GM12878 (cell line): ENCODE measurements at regions of chr13 and their contacts with region 1.

Region 1: DNA sequence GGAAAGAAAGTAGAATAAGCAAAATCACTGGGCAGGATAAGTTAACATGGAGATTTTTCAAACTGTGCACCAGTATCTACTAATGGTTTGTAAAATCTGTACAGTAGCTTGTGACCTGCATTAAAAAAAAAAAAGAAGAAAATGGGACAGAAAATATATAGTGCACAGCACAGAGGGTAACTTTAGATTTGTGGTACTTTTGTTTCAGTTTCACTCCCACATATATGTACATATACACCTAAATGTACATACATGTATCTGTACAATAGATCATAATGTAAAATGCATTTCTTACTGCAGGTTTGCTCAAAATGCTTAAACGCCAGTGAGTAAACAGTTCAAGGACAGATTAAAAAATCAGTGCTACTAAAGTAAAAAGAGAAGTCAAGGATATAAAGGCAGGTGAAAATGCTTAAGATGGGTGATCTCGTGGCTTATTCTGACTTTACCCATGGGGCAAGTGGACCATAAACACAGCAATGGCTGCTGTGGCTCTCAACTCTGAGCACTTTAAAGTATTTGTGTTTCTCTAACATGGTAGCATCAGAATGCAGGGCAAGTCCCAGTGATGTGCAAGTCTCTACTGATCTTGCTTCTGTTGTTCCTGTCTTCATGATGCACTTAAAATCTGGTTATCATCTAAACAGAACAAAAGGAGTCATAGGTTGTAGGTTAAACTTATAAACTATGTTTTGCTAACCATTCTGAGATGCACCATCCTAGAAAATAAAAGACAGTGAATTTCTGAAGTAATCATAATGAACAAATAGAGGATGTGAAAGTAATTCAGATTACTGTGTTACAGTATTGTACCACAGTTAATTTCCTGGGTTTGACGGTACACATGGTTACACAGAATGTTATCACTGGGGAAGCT is 112.3 kb downstream of the MIPEP start:
- DNase-seq: peak; percentile 56
- ATAC-seq: peak; percentile 96
- H3K4me3 ChIP-seq: no peak overlapping the region
- H3K27ac ChIP-seq: peak overlapping the region; percentile 94
- H3K4me1 ChIP-seq: peaks cover 40% of the 10 kb centered on the region
- H3K27me3 ChIP-seq: no peaks in the 10 kb centered on the region
- CTCF ChIP-seq: no peak
- EP300 ChIP-seq: peak; percentile 84 to 91
- POLR2A ChIP-seq: no peak
- RAD21 ChIP-seq: no peak

Region 2: GRCh38 chr13:23715762-23716235 is 61.1 kb before region 1 on chr13:
- CTCF ChIA-PET with region 1: interaction called, 3 read pairs
- POLR2A ChIA-PET with region 1: no interaction called
- RAD21 ChIA-PET with region 1: interaction called, 3 read pairs
- SMC1A ChIA-PET with region 1: interaction called, 3 read pairs
- in situ Hi-C with region 1: no loop called
- intact Hi-C with region 1: loop called (anchors 5 kb)
- DNase-seq: no peak
- ATAC-seq: peak; percentile 40
- H3K4me3 ChIP-seq: no peak overlapping the region
- H3K27ac ChIP-seq: no peak overlapping the region
- H3K4me1 ChIP-seq: peaks cover 8% of the 10 kb centered on the region
- H3K27me3 ChIP-seq: no peaks in the 10 kb centered on the region
- CTCF ChIP-seq: peak; percentile 17 to 46 (median 38); a peak in 3 of 6 replicates
- EP300 ChIP-seq: no peak
- POLR2A ChIP-seq: no peak
- RAD21 ChIP-seq: peak; percentile 56

Region 3: GRCh38 chr13:23752111-23753001 is 24.6 kb before region 1 on chr13:
- CTCF ChIA-PET with region 1: interaction called, 5 read pairs
- POLR2A ChIA-PET with region 1: interaction called, 9 read pairs
- RAD21 ChIA-PET with region 1: interaction called, 7 read pairs
- SMC1A ChIA-PET with region 1: interaction called, 11 read pairs
- in situ Hi-C with region 1: no loop called
- intact Hi-C with region 1: loop called (anchors 2 kb)
- DNase-seq: peak; percentile 69
- ATAC-seq: peak; percentile 85
- H3K4me3 ChIP-seq: no peak overlapping the region
- H3K27ac ChIP-seq: peak overlapping the region; percentile 86
- H3K4me1 ChIP-seq: peaks cover 42% of the 10 kb centered on the region
- H3K27me3 ChIP-seq: no peaks in the 10 kb centered on the region
- CTCF ChIP-seq: no peak
- EP300 ChIP-seq: peak; percentile 33 to 74; a peak in 3 of 4 replicates
- POLR2A ChIP-seq: no peak
- RAD21 ChIP-seq: peak; percentile 29; the same call in 1 of the 2 replicates

Region 4: GRCh38 chr13:23794267-23795161 is 17.6 kb after region 1 on chr13:
- CTCF ChIA-PET with region 1: interaction called, 17 read pairs
- POLR2A ChIA-PET with region 1: interaction called, 6 read pairs
- RAD21 ChIA-PET with region 1: interaction called, 21 read pairs
- SMC1A ChIA-PET with region 1: interaction called, 27 read pairs
- in situ Hi-C with region 1: no loop called
- intact Hi-C with region 1: loop called (anchors 1 kb)
- DNase-seq: peak; percentile 72
- ATAC-seq: peak; percentile 72
- H3K4me3 ChIP-seq: 0 out of 2 replicates have a peak overlapping the region, but pooled peaks have one; percentile 22
- H3K27ac ChIP-seq: peak overlapping the region; percentile 93
- H3K4me1 ChIP-seq: peaks cover 51% of the 10 kb centered on the region
- H3K27me3 ChIP-seq: no peaks in the 10 kb centered on the region
- CTCF ChIP-seq: no peak
- EP300 ChIP-seq: peak; percentile 67 to 98
- POLR2A ChIP-seq: no peak
- RAD21 ChIP-seq: no peak

Region 5: DNA sequence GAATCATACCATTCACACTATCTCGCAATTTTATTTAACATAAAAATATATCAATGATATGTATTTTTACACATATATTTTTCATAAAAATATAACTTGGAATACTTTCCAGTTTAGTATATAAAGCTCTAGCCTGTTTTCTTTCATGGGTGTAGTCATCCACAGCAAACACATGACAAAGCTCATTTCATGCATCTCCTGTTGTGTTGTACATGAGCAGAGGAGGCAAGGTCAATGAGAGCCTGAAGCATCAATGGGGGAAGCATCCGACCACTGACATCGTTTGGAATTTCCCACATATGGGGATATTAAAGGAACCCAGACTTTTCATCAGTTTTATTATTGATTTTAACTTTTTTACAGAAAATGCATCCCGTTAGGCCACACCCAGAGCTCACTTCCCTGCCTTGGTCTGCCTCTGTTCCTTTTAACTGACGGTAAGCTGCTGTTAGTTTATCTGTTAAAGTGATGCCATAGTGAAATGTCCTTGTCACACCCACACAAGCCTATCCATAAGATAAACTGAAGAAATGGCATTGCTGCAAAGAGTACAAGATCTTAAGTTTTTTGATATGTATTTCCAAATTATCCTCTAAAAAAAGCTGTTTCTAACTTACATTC is 68.3 kb after region 1 on chr13:
- CTCF ChIA-PET with region 1: interaction called, 9 read pairs
- POLR2A ChIA-PET with region 1: no interaction called
- RAD21 ChIA-PET with region 1: interaction called, 9 read pairs
- SMC1A ChIA-PET with region 1: interaction called, 11 read pairs
- in situ Hi-C with region 1: no loop called
- intact Hi-C with region 1: no loop called
- DNase-seq: no peak
- ATAC-seq: peak; percentile 59
- H3K4me3 ChIP-seq: 0 out of 2 replicates have a peak overlapping the region, but pooled peaks have one; percentile 26
- H3K27ac ChIP-seq: peak overlapping the region; percentile 82
- H3K4me1 ChIP-seq: peaks cover 56% of the 10 kb centered on the region
- H3K27me3 ChIP-seq: no peaks in the 10 kb centered on the region
- CTCF ChIP-seq: no peak
- EP300 ChIP-seq: no peak
- POLR2A ChIP-seq: no peak
- RAD21 ChIP-seq: no peak

Region 6: GRCh38 chr13:24463078-24463477 is 686.1 kb after region 1 on chr13:
- CTCF ChIA-PET with region 1: no interaction called
- POLR2A ChIA-PET with region 1: no interaction called
- RAD21 ChIA-PET with region 1: no interaction called
- SMC1A ChIA-PET with region 1: no interaction called
- in situ Hi-C with region 1: no loop called
- intact Hi-C with region 1: no loop called
- DNase-seq: no peak
- ATAC-seq: no peak
- H3K4me3 ChIP-seq: no peak overlapping the region
- H3K27ac ChIP-seq: no peak overlapping the region
- H3K4me1 ChIP-seq: peaks cover 8% of the 10 kb centered on the region
- H3K27me3 ChIP-seq: no peaks in the 10 kb centered on the region
- CTCF ChIP-seq: no peak
- EP300 ChIP-seq: no peak
- POLR2A ChIP-seq: no peak
- RAD21 ChIP-seq: no peak